ENCODE measurements at regions of chr14 and their contacts with region 1.

Region 1: GRCh38 chr14:76784266-76785264 is 23.3 kb downstream of the VASH1 start:
- DNase-seq: peak; percentile 83
- H3K4me3 ChIP-seq: no peak overlapping the region
- H3K27ac ChIP-seq: no peak overlapping the region
- H3K4me1 ChIP-seq: peaks cover 0 to 24% (median 6%) of the 10 kb centered on the region in 4 donors
- H3K27me3 ChIP-seq: no peaks in the 10 kb centered on the region
- CTCF ChIP-seq: peak; percentile 20 to 74 (median 55)
- EP300 ChIP-seq: no peak
- POLR2A ChIP-seq: no peak

Region 2: GRCh38 chr14:76710056-76711010 is 74.2 kb before region 1 on chr14:
- intact Hi-C with region 1: loop called (anchors 2 kb)
- DNase-seq: no peak
- H3K4me3 ChIP-seq: no peak overlapping the region
- H3K27ac ChIP-seq: no peak overlapping the region
- H3K4me1 ChIP-seq: no peaks in the 10 kb centered on the region
- H3K27me3 ChIP-seq: no peaks in the 10 kb centered on the region
- CTCF ChIP-seq: peak; percentile 16 to 75 (median 68)
- EP300 ChIP-seq: no peak
- POLR2A ChIP-seq: no peak

Region 3: DNA sequence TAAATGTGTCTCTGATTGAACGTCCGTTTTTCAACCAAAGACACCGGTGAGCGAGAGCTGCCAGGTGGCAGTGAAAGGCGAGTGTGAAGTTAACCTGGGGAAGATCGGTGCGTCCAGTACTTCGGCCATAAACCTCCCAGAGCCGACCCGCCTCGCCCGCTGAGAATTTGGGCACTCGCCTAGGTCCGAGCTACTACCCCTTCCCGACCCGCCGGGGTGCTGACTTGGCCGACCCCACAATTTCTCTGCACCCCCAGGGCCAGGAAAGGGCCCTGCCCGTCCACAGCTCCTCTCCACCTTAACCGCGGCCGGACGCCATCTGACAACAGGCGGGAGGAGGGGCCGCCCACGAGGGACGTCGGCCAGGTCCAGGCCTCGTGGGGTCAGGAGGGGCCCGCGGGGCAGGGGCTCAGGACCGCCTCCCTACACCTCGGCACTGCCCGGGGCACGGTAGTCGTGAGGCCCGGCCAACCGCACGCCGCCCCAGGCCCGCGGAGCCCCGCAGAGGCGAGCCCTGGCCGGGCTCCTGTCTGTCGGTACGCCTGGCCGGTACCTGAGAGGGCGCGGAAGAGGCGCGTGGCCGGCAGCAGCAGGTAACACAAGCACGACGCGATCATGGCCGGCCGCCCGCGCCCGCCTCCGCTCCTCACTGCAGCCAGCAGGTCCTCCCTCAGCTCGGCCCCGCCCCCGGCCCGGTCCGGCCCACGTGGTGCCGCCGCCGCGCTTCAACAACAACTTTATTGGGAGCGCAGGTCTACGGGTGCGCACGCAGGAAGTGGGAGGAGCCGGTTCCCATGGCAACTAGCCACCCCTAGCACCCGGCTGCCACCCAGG is 27.9 kb after region 1 on chr14 and contains the start of gene ANGEL1:
- intact Hi-C with region 1: no loop called
- DNase-seq: peak; percentile 98
- H3K4me3 ChIP-seq: peak within 1 kb of the TSS; percentile 70 to 93 (median 84)
- H3K27ac ChIP-seq: peak within 1 kb of the TSS; percentile 76 to 88 (median 81)
- H3K4me1 ChIP-seq: peaks cover 0 to 25% (median 18%) of the 10 kb centered on the region in 4 donors
- H3K27me3 ChIP-seq: no peaks in the 10 kb centered on the region
- CTCF ChIP-seq: no peak
- EP300 ChIP-seq: peak in 1 of 4 donors; percentile 66
- POLR2A ChIP-seq: peak in 1 of 2 donors; percentile 62
- total RNA-seq, gene ANGEL1: 9.6 to 16.1 (median 10.8) TPM